ENCODE measurements at regions of chr1 and their contacts with region 1.

Region 1: GRCh38 chr1:63917571-63918417 is 144.0 kb downstream of the ROR1 start:
- DNase-seq: peak; percentile 21
- ATAC-seq: no peak
- H3K4me3 ChIP-seq: no peak overlapping the region
- H3K27ac ChIP-seq: no peak overlapping the region
- H3K4me1 ChIP-seq: peaks cover 13% of the 10 kb centered on the region
- H3K27me3 ChIP-seq: no peaks in the 10 kb centered on the region
- CTCF ChIP-seq: peak; percentile 17; the same call in 1 of the 2 replicates
- POLR2A ChIP-seq: no peak
- RAD21 ChIP-seq: no peak

Region 2: DNA sequence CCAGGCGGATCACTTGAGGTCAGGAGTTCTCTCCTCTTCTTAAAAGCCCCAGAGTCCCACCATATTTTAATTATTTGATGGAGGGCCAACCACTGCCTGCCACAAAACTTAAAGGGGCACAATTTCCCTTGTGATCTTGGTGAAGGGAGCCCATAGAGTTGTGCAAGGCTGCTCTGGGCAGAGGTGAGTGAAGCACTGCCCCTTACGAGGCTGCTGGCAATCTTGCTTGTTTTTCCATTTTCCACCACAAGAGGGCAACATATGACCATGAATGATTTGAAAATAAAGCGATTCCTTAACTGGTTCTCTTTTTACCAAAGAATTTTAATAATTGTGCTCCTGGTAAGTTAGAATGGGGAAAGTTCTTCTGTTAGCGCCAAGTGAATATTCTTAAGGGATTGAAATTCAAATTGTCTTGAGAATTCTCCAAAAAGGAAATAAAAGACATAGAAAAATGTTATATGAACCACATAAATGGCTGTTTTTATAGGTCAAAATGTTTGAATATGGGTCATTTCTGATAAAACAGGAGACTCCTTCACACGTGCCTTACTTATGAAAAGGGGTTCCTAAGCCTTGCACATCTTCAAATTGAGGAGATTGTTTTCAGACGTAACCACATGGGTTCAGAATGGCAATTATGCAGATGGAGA is 301.9 kb before region 1 on chr1:
- CTCF ChIA-PET with region 1: no interaction called
- POLR2A ChIA-PET with region 1: no interaction called
- dilution Hi-C with region 1: no loop called
- in situ Hi-C with region 1: no loop called
- intact Hi-C with region 1: loop called (anchors 2 kb)
- DNase-seq: peak; percentile 75
- ATAC-seq: peak; percentile 78
- H3K4me3 ChIP-seq: no peak overlapping the region
- H3K27ac ChIP-seq: no peak overlapping the region
- H3K4me1 ChIP-seq: peaks cover 11% of the 10 kb centered on the region
- H3K27me3 ChIP-seq: no peaks in the 10 kb centered on the region
- CTCF ChIP-seq: peak; percentile 81
- POLR2A ChIP-seq: no peak
- RAD21 ChIP-seq: peak; percentile 85

Region 3: DNA sequence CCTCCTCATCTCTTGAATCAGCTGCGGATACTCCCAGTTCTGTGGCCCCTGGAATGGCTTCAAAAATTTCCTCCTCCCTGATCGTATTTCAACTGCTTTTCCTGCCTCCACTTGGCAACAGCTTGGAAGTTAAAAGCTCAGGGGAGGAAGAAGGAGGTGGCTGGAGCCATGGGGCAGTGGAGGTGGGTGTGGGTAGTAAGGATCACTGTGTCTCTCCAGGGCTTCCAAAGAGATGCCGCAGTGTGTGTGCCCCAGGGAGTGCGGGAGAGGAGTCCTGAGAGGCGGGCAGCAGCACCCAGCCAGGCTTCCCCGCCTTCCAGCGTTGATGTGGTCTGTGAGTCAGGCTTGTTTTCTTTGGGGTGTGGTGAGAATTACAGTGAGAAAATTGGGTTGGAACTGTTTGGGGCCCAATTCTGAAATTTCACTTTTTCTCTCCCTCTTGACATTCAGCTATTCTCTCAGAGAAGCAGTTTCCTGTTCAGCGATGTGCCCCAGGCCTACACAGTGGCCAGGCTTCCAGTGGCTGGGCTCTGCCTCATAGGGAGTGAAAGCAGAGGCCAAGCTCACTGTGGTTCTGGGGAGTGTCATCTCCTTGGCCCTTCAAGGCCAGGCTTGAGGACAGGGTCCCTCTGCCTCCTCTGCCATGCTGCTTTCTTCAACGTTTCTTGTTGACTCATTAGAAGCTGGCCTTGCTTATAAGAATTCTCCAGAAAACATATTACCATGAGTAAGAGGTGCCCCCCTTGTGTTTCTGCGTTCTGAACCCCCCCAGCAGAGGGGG is 255.5 kb before region 1 on chr1:
- CTCF ChIA-PET with region 1: no interaction called
- POLR2A ChIA-PET with region 1: no interaction called
- dilution Hi-C with region 1: no loop called
- in situ Hi-C with region 1: no loop called
- intact Hi-C with region 1: no loop called
- DNase-seq: peak; percentile 67
- ATAC-seq: peak; percentile 64
- H3K4me3 ChIP-seq: no peak overlapping the region
- H3K27ac ChIP-seq: peak overlapping the region; percentile 31
- H3K4me1 ChIP-seq: peaks cover 16% of the 10 kb centered on the region
- H3K27me3 ChIP-seq: no peaks in the 10 kb centered on the region
- CTCF ChIP-seq: no peak
- POLR2A ChIP-seq: no peak
- RAD21 ChIP-seq: no peak

Region 4: DNA sequence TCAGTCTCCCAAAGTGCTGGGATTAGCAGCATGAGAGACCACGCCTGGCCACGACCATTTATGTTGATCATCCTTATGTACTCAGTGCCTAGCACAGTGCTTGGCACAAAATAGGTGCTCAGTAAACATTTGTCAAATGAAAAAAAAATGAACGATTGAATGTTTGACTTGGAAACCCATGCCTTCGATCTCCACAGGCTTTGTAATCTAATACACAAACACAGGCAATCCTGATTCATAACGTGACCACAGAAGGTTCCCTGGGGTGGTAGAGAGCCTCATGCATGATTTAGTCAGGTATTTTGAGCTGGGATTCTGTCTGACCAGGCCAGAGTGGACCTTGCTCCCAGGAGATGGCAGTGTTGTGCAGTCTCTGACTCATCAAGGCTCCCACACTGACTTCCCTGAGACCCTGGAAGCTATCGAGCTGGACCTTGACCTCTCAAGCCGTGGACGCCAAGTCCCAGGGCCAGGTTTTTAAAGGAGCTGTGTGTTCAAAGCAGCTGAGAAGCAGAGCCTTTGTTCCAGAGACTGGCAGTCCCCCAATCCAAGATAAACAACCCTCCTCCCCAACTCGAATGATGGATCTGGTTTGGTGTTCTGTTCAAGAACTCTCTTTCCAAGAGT is 243.4 kb before region 1 on chr1:
- CTCF ChIA-PET with region 1: interaction called, 4 read pairs
- POLR2A ChIA-PET with region 1: no interaction called
- dilution Hi-C with region 1: no loop called
- in situ Hi-C with region 1: loop called (anchors 10 kb)
- intact Hi-C with region 1: loop called (anchors 5 kb)
- DNase-seq: peak; percentile 93
- ATAC-seq: peak; percentile 99
- H3K4me3 ChIP-seq: no peak overlapping the region
- H3K27ac ChIP-seq: no peak overlapping the region
- H3K4me1 ChIP-seq: no peaks in the 10 kb centered on the region
- H3K27me3 ChIP-seq: no peaks in the 10 kb centered on the region
- CTCF ChIP-seq: peak; percentile 84
- POLR2A ChIP-seq: no peak
- RAD21 ChIP-seq: peak; percentile 83

Region 5: GRCh38 chr1:63691701-63692425 is 225.9 kb before region 1 on chr1:
- CTCF ChIA-PET with region 1: interaction called, 14 read pairs
- POLR2A ChIA-PET with region 1: no interaction called
- dilution Hi-C with region 1: no loop called
- in situ Hi-C with region 1: no loop called
- intact Hi-C with region 1: loop called (anchors 5 kb)
- DNase-seq: peak; percentile 94
- ATAC-seq: peak; percentile 89
- H3K4me3 ChIP-seq: no peak overlapping the region
- H3K27ac ChIP-seq: no peak overlapping the region
- H3K4me1 ChIP-seq: peaks cover 2% of the 10 kb centered on the region; the same call in 1 of the 2 replicates
- H3K27me3 ChIP-seq: no peaks in the 10 kb centered on the region; the same call in 1 of the 2 replicates
- CTCF ChIP-seq: peak; percentile 84
- POLR2A ChIP-seq: no peak
- RAD21 ChIP-seq: peak; percentile 87

Region 6: GRCh38 chr1:63821091-63822005 is 96.4 kb before region 1 on chr1:
- CTCF ChIA-PET with region 1: no interaction called
- POLR2A ChIA-PET with region 1: no interaction called
- dilution Hi-C with region 1: no loop called
- in situ Hi-C with region 1: no loop called
- intact Hi-C with region 1: loop called (anchors 5 kb)
- DNase-seq: peak; percentile 73
- ATAC-seq: peak; percentile 48; the same call in 1 of the 2 replicates
- H3K4me3 ChIP-seq: no peak overlapping the region
- H3K27ac ChIP-seq: no peak overlapping the region
- H3K4me1 ChIP-seq: peaks cover 12% of the 10 kb centered on the region; the same call in 1 of the 2 replicates
- H3K27me3 ChIP-seq: no peaks in the 10 kb centered on the region; the same call in 1 of the 2 replicates
- CTCF ChIP-seq: no peak
- POLR2A ChIP-seq: no peak
- RAD21 ChIP-seq: no peak

Region 7: GRCh38 chr1:63868268-63868781 is 49.5 kb before region 1 on chr1:
- CTCF ChIA-PET with region 1: no interaction called
- POLR2A ChIA-PET with region 1: no interaction called
- dilution Hi-C with region 1: no loop called
- in situ Hi-C with region 1: no loop called
- intact Hi-C with region 1: no loop called
- DNase-seq: peak; percentile 55
- ATAC-seq: no peak; the same call in 1 of the 2 replicates
- H3K4me3 ChIP-seq: no peak overlapping the region
- H3K27ac ChIP-seq: no peak overlapping the region
- H3K4me1 ChIP-seq: no peaks in the 10 kb centered on the region; the same call in 1 of the 2 replicates
- H3K27me3 ChIP-seq: no peaks in the 10 kb centered on the region; the same call in 1 of the 2 replicates
- CTCF ChIP-seq: no peak
- POLR2A ChIP-seq: no peak
- RAD21 ChIP-seq: no peak

Region 8: DNA sequence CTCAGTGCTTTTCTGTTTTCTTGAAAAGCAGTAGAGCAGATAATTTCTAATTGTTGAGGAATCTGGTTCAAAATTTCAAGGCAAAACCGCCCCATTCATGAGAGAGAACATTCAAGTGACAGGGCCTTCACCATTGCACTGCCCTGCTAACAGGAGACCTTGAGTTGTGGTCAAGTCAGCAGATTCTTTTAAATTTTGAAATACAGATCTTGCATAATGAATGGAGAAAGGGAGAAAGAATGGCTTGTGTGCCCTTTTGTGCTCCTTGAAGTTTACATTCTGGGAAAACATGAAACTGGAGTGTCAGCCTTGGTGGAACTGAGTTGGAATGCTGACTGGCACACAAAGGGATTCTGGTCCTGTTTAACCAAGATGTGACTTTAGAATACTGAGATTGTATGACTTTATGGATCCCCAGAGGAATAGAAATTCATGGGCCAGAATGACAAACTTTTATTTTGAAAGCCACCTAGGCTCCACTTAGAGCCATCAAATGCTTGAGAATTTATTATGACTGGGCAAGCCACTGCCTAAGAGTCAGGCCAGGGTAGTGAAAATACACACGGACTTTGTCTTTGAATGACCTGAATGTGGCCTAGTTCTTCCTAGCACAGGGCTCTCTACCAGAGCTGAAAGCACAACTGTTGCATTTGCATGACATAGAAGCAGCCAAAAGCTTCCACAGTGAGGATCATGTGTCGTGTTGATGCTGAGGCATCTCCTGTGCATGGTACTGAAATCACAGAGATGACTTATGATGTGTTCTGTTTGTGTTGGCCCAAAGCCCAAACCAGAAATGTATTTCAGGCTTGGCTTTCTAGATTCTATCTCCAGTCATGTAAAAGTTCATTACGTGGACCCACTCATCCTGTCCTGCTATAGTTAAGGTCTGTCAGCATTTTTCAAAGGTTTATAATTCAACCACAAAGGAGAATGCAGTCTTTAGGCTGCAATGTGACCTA is 121.5 kb after region 1 on chr1:
- CTCF ChIA-PET with region 1: no interaction called
- POLR2A ChIA-PET with region 1: no interaction called
- dilution Hi-C with region 1: no loop called
- in situ Hi-C with region 1: no loop called
- intact Hi-C with region 1: loop called (anchors 2 kb)
- DNase-seq: peak; percentile 100
- ATAC-seq: peak; percentile 84
- H3K4me3 ChIP-seq: no peak overlapping the region
- H3K27ac ChIP-seq: peak overlapping the region; percentile 51; the same call in 1 of the 2 replicates
- H3K4me1 ChIP-seq: peaks cover 22% of the 10 kb centered on the region
- H3K27me3 ChIP-seq: no peaks in the 10 kb centered on the region
- CTCF ChIP-seq: no peak
- POLR2A ChIP-seq: no peak
- RAD21 ChIP-seq: no peak; the same call in 1 of the 2 replicates

Region 9: GRCh38 chr1:64136752-64137411 is 219.1 kb after region 1 on chr1:
- CTCF ChIA-PET with region 1: interaction called, 4 read pairs
- POLR2A ChIA-PET with region 1: no interaction called
- dilution Hi-C with region 1: no loop called
- in situ Hi-C with region 1: no loop called
- intact Hi-C with region 1: loop called (anchors 1 kb)
- DNase-seq: peak; percentile 94
- ATAC-seq: peak; percentile 79
- H3K4me3 ChIP-seq: no peak overlapping the region
- H3K27ac ChIP-seq: no peak overlapping the region
- H3K4me1 ChIP-seq: peaks cover 7% of the 10 kb centered on the region; the same call in 1 of the 2 replicates
- H3K27me3 ChIP-seq: no peaks in the 10 kb centered on the region
- CTCF ChIP-seq: peak; percentile 90
- POLR2A ChIP-seq: no peak
- RAD21 ChIP-seq: peak; percentile 90